ENCODE measurements at regions of chr6 and their contacts with region 1.

Region 1: DNA sequence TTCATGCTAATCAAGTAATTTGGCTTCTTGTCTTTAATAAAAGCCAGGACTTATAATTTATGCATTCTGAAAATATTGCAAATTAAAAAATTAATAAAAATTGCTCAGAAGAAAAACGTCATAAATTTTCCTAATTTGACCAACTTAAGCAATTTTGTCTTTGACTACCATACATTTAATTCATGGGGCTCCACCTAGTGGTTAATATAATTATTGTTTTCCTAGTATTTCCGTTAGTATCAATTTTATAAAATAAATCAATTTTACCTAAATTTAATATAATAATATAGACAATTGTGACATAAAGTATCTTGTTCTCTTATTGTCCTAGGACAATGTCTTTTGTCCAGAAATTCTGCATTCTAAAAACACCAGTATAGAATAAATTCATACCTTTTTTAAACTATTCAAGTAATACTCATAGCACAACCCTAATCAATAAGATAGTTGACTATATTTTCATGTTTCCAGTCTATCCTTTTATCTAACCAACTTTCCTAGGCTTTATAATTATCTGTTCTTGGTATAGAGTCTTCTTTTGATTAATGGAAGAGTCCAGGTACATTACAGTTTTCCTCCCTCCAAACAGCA is 319.9 kb downstream of the TRDN start:
- DNase-seq: no peak

Region 2: DNA sequence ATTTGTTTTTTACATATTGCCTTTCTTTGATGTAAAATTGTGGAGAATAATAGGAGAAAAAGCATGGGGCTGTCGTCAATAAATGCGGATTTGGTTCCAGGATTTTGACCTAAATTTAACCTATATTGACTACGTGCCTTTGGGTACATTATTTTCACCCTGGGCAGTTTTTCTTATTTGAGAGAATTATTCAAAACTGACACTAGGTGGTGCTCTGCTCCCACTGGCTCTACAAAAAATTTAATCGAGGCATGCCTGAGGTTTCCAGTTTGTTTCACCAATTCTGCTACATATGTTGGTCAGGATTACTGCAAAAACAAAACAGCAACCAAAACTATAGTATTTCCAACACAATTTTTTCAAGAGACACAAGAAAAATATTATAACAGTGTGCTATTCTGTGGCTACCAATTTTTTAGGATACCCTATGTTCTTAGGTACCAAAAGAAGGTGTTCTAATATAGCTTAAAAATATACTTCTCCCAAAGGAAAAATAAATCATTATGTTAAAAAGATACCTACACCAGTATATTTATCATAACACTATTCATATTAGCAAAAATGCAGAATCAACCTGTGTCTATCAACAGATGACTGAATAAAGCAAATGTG is 585.9 kb before region 1 on chr6:
- intact Hi-C with region 1: loop called (anchors 10 kb)
- DNase-seq: peak in 18 of 42 donors; percentile 20 to 67 (median 36)

Region 3: DNA sequence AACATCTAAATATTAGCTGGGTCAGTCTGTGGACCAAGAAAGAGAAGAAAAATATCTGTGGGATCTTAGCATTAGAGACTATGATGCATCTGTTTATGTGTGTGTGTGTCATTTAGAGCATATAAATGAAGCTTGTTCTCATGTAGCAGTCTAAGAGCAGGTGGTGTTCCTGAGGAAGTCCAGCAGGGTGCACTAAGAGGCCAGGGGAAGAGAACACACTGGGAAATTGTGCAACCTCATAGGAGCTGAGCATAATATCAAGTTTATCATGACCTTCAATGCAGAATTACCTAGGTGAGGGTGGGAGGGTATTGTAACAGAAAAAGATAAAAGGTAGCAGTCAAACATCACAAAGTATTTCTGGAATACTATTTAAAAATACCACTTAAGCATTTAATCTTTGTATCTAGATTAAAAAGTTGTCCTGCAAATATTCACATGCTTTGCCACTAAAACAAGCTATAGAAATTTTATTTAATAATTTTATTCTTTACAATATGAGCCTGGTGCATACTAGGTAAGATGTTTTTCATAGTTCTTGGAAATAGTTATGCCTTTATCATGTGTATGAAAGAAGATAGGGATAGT is 447.3 kb before region 1 on chr6:
- intact Hi-C with region 1: loop called (anchors 5 kb)
- DNase-seq: peak in 33 of 42 donors; percentile 5 to 73 (median 37)

Measured in head of caudate nucleus (tissue), 42 donors.